Uterus (tissue), 4 donors: ENCODE measurements at regions of chr2 and their contacts with region 1.

Region 1: DNA sequence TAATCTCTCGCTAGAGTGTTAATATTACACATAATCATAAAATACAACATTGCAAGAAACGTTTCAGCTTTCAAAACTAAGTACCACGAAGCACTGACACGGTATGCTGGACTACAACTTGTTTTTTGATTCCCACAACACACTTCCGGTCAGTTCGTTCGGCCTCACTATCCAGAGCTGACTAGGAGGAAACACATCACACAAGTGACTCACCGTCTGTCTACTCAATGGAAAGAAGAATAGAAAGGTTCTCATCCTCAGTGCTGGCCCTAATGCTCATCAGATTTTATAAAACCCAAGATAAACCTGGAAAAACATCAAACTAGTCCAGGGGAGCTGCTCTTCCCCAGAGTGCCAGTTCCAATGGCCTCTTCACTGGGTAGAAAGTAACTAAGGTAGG is 42.9 kb downstream of the ZNF385B start:
- DNase-seq: no peak
- H3K4me3 ChIP-seq: no peak overlapping the region
- H3K27ac ChIP-seq: no peak overlapping the region
- H3K4me1 ChIP-seq: no peaks in the 10 kb centered on the region
- H3K27me3 ChIP-seq: no peaks in the 10 kb centered on the region
- CTCF ChIP-seq: no peak
- POLR2A ChIP-seq: no peak

Region 2: DNA sequence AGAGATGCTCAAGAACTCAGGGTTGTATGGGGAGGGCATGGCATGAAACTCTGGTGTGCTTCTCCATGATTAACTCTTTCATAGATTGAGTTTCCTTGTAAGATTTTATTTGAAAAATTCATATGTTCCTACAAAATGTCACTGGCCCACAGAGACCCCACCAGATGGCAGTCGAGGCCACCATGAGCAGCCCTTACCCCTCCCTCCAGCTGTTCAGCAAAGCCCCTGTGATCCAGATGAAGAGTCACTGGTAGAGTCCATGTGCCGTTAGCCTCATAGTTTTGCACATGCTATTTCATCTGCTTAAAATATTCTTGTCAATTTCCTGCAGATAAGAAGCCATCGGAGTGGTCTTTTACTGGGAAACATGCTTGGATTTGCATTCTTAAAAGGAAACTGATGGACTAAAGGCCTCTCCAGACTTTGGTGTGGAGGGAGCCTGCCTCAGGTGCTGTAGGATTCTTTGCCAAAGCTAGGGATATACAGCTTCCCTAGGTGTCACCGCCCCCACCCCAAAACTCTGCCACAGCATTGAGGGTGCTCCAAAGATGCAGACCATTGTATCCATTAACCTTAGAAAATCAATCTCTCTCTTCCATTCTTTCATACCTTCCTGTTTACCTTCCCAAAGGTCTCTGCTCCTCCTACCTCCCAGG is 24.1 kb after region 1 on chr2:
- intact Hi-C with region 1: loop called (anchors 2 kb)
- DNase-seq: no peak
- H3K4me3 ChIP-seq: no peak overlapping the region
- H3K27ac ChIP-seq: no peak overlapping the region
- H3K4me1 ChIP-seq: no peaks in the 10 kb centered on the region
- H3K27me3 ChIP-seq: no peaks in the 10 kb centered on the region
- CTCF ChIP-seq: no peak
- POLR2A ChIP-seq: no peak

Region 3: GRCh38 chr2:180276733-180277132 is 458.2 kb after region 1 on chr2:
- intact Hi-C with region 1: no loop called
- DNase-seq: no peak
- H3K4me3 ChIP-seq: no peak overlapping the region
- H3K27ac ChIP-seq: no peak overlapping the region
- H3K4me1 ChIP-seq: no peaks in the 10 kb centered on the region
- H3K27me3 ChIP-seq: no peaks in the 10 kb centered on the region
- CTCF ChIP-seq: no peak
- POLR2A ChIP-seq: no peak